ENCODE measurements at regions of chr10 and their contacts with region 1.

Region 1: DNA sequence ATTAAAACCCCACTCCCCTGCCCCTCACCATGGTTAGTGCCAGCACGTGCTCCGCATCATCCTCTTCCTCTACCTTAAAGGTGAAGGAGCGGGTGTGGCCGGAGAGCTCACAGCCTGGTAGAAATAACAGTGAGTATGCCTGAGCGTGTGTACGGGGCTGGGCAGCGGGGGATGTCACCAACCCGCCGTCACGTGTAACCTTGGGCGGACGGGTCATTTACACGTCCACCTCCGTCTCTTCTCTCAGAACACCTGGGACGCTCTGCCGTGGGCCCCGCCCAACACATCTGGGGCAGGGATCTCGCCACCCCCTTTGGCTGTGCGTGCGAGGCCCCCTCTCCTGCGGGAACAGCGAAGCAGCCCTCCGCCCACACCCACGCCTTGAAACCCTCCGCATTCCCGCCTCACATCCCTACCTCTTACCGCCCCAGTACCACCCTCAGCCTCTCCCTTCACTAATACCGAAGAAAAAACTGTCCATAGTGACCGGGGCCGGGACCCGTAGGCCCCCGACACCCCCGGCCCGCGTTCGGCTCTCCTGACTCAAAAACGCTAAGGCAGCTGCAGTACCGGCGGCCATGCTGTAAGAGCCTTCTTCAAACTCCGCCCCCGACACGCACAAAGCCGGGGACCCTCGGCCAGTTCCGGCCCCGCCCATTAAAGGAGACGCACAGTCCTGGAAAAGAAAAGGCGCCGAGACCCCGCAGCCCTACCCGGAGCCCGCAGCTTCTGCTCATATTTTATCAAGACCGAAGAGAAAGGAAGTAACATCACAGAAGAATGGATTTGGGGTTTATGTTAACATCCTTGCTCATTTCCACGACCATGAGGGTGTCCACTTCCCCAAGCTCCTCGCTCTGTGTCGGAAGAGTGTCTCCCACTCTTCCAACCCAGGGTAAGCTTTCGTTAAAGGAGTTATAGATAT is at the start of gene NPM3:
- DNase-seq: peak; percentile 83
- H3K4me3 ChIP-seq: peak within 1 kb of the TSS; percentile 57 to 59
- H3K27ac ChIP-seq: peak within 1 kb of the TSS; percentile 39 to 53
- H3K4me1 ChIP-seq: peaks cover 5% of the 10 kb centered on the region
- H3K27me3 ChIP-seq: no peaks in the 10 kb centered on the region
- CTCF ChIP-seq: peak in 2 of 4 experiments; percentile 27
- POLR2A ChIP-seq: no peak
- total RNA-seq, gene NPM3: 43.7 to 47.4 TPM

Region 2: GRCh38 chr10:101602761-101603398 is 180.2 kb before region 1 on chr10:
- intact Hi-C with region 1: loop called (anchors 5 kb)
- DNase-seq: peak; percentile 48
- H3K4me3 ChIP-seq: no peak overlapping the region
- H3K27ac ChIP-seq: no peak overlapping the region
- H3K4me1 ChIP-seq: no peaks in the 10 kb centered on the region
- H3K27me3 ChIP-seq: no peaks in the 10 kb centered on the region
- CTCF ChIP-seq: peak; percentile 54 to 76 (median 69)
- POLR2A ChIP-seq: no peak

Region 3: DNA sequence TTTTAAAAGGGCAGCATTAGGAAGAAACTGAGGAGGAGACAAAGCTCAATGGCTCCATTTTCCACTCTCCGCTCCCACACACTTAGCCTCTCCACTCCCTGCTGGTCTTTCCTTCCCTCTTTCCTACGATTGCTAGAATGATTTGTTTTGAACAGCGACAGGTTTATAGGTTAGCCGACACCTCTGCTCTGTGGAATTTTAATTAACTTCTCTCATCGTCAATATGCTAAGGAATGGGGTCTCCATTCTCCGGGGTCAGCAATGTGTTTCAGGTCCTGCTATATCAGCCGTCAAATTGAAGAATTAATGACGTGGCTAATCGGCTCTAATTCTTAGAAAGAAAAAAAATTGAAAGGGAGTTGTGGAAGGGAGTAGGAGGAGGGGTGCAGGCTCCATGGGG is 117.0 kb before region 1 on chr10:
- intact Hi-C with region 1: no loop called
- DNase-seq: no peak
- H3K4me3 ChIP-seq: no peak overlapping the region
- H3K27ac ChIP-seq: no peak overlapping the region
- H3K4me1 ChIP-seq: no peaks in the 10 kb centered on the region
- H3K27me3 ChIP-seq: no peaks in the 10 kb centered on the region
- CTCF ChIP-seq: no peak
- POLR2A ChIP-seq: no peak

Region 4: GRCh38 chr10:101818119-101818871 is 35.2 kb after region 1 on chr10 and contains the start of gene OGA:
- intact Hi-C with region 1: loop called (anchors 5 kb)
- DNase-seq: peak; percentile 98
- H3K4me3 ChIP-seq: peak within 1 kb of the TSS; percentile 99 to 100
- H3K27ac ChIP-seq: peak within 1 kb of the TSS; percentile 96 to 97
- H3K4me1 ChIP-seq: peaks cover 5% of the 10 kb centered on the region
- H3K27me3 ChIP-seq: no peaks in the 10 kb centered on the region
- CTCF ChIP-seq: peak in 1 of 4 experiments; percentile 9
- POLR2A ChIP-seq: peak; percentile 98
- total RNA-seq, gene OGA: 82.5 to 143 TPM

Region 5: GRCh38 chr10:101858723-101859500 is 75.8 kb after region 1 on chr10:
- intact Hi-C with region 1: no loop called
- DNase-seq: no peak
- H3K4me3 ChIP-seq: no peak overlapping the region
- H3K27ac ChIP-seq: no peak overlapping the region
- H3K4me1 ChIP-seq: no peaks in the 10 kb centered on the region
- H3K27me3 ChIP-seq: no peaks in the 10 kb centered on the region
- CTCF ChIP-seq: no peak
- POLR2A ChIP-seq: no peak